Activated CD4-positive, alpha-beta memory T cell treated with anti-CD3 and anti-CD28 coated beads for 36 hours (primary cell): ENCODE measurements at regions of chr14 and their contacts with region 1.

Region 1: GRCh38 chr14:99480917-99481744 is at the start of gene CCNK:
- DNase-seq: peak; percentile 100
- H3K4me3 Mint-ChIP-seq: peak within 1 kb of the TSS; percentile 97
- H3K27ac Mint-ChIP-seq: peak within 1 kb of the TSS; percentile 94
- H3K4me1 Mint-ChIP-seq: peaks cover 55% of the 10 kb centered on the region
- H3K27me3 Mint-ChIP-seq: no peaks in the 10 kb centered on the region
- total RNA-seq, gene CCNK: 86.6 to 90.4 TPM

Region 2: DNA sequence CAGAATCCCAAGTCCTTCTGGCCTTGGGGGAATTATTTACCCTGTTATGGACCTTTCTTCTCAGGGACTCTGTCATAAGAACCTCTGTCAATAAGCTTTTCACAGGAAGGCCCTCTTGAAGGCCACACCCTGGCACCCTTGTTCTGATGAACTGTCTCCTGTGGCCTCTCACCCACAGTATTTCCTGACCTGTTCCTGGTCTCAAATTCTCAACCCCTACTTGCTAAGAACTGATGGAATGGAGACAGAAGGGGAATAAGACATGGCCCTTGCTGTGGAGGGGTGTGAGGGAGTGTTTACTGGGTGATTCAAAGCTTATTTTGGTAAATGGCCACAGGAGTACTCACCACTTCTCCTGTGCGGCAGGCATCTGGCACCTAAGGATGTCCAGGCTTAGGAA is 1292.1 kb before region 1 on chr14:
- CTCF ChIA-PET with region 1: no interaction called
- POLR2A ChIA-PET with region 1: no interaction called
- intact Hi-C with region 1: loop called (anchors 5 kb)
- DNase-seq: peak; percentile 65
- H3K4me3 Mint-ChIP-seq: peak overlapping the region; percentile 75
- H3K27ac Mint-ChIP-seq: peak overlapping the region; percentile 100
- H3K4me1 Mint-ChIP-seq: peaks cover 94% of the 10 kb centered on the region
- H3K27me3 Mint-ChIP-seq: no peaks in the 10 kb centered on the region

Region 3: DNA sequence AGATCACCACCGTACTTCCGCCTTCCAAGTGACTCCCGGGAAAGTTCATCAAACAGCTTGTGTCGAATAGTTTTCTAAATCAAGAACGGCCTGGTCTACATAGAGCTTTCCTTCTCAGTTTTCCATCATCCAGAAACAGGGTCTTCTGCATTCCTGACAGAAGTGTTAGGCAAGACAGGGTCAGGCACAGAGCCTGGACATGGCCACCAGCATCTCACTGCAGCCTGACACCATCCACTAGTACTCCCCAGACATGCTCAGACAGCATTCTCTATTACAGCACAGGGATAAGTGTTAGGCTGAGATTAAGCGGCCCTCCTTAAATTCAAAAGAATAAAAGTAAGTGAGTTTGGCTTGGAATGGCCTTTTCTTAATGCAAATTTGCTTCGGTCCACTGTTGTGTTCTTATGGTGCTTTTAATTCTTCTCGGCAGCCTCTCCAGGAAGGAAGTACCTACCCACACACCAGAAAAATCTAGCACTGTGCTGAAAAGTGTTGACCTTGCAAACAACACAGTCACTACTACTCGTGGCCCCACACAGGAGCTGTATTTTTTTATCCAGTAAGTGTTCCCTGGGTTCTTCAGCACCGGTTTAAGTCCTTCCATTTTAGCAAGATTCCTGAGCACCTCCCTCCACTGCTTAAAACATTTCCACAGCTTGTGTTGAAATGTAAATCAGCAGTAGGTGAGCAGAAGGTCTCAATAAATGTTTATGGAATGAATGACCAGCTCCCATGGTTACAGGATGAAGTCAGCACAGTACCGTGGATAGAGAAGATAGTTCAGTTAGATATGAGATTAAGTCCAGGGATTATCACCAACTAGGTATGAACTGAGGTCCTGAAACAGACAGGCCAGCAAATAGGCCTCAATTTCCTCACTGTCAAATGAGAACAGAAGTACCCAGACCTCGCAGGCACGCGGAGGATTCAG is 44.6 kb before region 1 on chr14:
- CTCF ChIA-PET with region 1: no interaction called
- POLR2A ChIA-PET with region 1: no interaction called
- intact Hi-C with region 1: loop called (anchors 2 kb)
- DNase-seq: no peak
- H3K4me3 Mint-ChIP-seq: peak overlapping the region; percentile 24
- H3K27ac Mint-ChIP-seq: peak overlapping the region; percentile 71
- H3K4me1 Mint-ChIP-seq: peaks cover 32% of the 10 kb centered on the region
- H3K27me3 Mint-ChIP-seq: no peaks in the 10 kb centered on the region

Region 4: GRCh38 chr14:99683619-99684355 is 202.7 kb after region 1 on chr14 and contains the start of gene CYP46A1:
- CTCF ChIA-PET with region 1: no interaction called
- POLR2A ChIA-PET with region 1: interaction called, 3 read pairs
- intact Hi-C with region 1: loop called (anchors 1 kb)
- DNase-seq: peak; percentile 100
- H3K4me3 Mint-ChIP-seq: peak within 1 kb of the TSS; percentile 84
- H3K27ac Mint-ChIP-seq: peak within 1 kb of the TSS; percentile 71
- H3K4me1 Mint-ChIP-seq: peaks cover 3% of the 10 kb centered on the region
- H3K27me3 Mint-ChIP-seq: peaks cover 5% of the 10 kb centered on the region
- total RNA-seq, gene CYP46A1: 0.19 to 0.21 TPM

Region 5: GRCh38 chr14:100239840-100240724 is 759.0 kb after region 1 on chr14:
- CTCF ChIA-PET with region 1: no interaction called
- POLR2A ChIA-PET with region 1: no interaction called
- intact Hi-C with region 1: loop called (anchors 5 kb)
- DNase-seq: peak; percentile 90
- H3K4me3 Mint-ChIP-seq: peak overlapping the region; percentile 81
- H3K27ac Mint-ChIP-seq: peak overlapping the region; percentile 89
- H3K4me1 Mint-ChIP-seq: peaks cover 54% of the 10 kb centered on the region
- H3K27me3 Mint-ChIP-seq: peaks cover 2% of the 10 kb centered on the region